ENCODE measurements at regions of chr1 and their contacts with region 1.

Region 1: GRCh38 chr1:46340404-46341221 is at the start of gene NSUN4:
- DNase-seq: peak; percentile 84 to 88
- H3K4me3 ChIP-seq: peak within 1 kb of the TSS; percentile 96
- H3K27ac ChIP-seq: peak within 1 kb of the TSS; percentile 90
- H3K4me1 ChIP-seq: peaks cover 20% of the 10 kb centered on the region; the same call in 1 of the 2 replicates
- H3K27me3 ChIP-seq: no peaks in the 10 kb centered on the region
- CTCF ChIP-seq: peak; percentile 68
- total RNA-seq, gene NSUN4: 31.7 and 33.9 TPM in 2 replicates

Region 2: DNA sequence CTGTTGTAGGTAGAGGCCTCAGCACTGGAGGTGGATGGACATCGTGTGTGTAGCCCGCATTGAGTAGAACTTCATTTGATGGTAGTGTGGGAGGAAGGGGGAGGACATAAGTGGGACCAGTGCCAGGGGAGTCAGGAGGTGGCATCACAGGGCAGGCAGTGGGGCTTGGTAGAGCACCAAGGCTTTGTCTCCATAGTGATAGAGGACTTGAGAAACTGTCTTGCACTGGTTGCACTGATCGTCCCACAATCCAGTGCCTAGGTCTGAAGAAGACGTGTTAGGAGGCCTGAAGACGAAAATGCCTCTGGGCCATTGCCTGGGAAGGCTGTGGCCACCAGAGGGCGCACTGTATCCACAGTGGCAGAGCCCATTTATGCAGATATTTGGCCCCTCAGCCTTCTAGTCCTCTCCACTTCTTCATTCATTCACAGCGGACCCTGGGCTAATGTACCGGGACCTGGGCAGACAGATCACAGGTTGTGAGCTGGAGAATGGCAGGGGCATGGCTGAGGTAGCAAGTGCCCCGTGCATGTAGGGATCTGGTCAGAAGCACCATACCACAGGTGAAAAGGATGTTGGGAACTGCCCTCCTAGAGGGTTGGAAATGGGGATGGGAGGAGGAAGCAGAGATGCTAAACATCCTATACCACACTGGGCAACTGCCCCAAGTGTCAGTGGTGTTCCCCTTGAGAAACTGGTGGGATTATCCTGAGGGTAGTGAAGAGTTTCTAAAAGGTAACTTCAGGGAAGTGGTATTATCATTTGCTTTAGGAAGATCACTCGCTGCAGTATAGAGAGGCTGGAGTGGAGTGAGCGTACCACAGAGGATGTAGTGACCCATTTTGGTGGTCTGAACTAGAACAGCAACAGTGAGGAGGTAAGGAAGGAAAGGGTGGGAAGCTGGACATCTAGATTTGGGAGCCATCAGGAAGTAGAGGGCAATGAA is 303.4 kb before region 1 on chr1:
- CTCF ChIA-PET with region 1: no interaction called
- POLR2A ChIA-PET with region 1: no interaction called
- intact Hi-C with region 1: loop called (anchors 5 kb)
- DNase-seq: peak; percentile 66 to 87
- H3K4me3 ChIP-seq: no peak overlapping the region
- H3K27ac ChIP-seq: no peak overlapping the region; the same call in 1 of the 2 replicates
- H3K4me1 ChIP-seq: peaks cover 24% of the 10 kb centered on the region
- H3K27me3 ChIP-seq: no peaks in the 10 kb centered on the region
- CTCF ChIP-seq: peak; percentile 97

Region 3: DNA sequence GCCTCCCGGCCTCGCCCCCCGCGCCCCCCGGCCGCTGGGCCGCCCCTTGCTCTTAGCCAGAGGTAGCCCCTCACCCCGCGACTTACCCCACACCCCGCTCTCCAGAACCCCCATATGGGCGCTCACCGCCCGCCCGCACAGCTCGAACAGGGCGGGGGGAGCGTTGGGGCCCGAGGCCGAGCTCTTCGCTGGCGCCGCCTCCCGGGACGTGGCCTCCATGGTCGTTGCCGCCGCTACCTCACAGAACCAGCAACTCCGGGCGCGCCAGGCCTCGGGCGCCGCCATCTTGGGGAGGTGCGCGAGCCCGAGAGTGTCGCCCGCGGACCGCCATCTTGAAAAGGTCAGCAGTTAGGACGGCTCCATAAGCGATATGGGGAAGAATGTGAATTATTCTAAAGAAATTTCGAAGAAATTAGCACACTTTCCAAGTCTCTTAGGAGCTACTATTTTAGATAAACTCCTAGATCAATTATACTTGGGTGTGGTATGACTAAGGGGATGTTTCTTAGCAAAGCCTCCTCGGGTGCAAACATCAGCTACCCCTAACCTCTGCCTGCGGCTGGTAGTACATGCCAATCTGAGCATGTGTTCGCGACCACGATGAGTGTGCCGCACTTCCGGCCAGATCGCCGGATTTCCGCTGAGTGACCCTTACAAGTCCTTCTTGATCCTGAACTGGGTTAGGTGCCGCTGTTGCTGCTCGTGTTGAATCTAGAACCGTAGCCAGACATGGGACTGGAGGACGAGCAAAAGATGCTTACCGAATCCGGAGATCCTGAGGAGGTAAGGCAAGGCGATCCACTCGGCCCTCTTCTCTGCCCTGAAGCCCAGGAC is 37.4 kb before region 1 on chr1 and contains the starts of genes LRRC41 and UQCRH:
- CTCF ChIA-PET with region 1: no interaction called
- POLR2A ChIA-PET with region 1: interaction called, 10 read pairs
- intact Hi-C with region 1: loop called (anchors 1 kb)
- DNase-seq: peak; percentile 94 to 95
- H3K4me3 ChIP-seq: peak within 1 kb of the TSS; percentile 95
- H3K27ac ChIP-seq: peak within 1 kb of the TSS; percentile 87
- H3K4me1 ChIP-seq: peaks cover 35% of the 10 kb centered on the region
- H3K27me3 ChIP-seq: no peaks in the 10 kb centered on the region
- CTCF ChIP-seq: 0 out of 2 replicates have a peak, but pooled peaks have one; percentile 12
- total RNA-seq, gene LRRC41: 65.9 and 66.3 TPM in 2 replicates
- total RNA-seq, gene UQCRH: 457 and 551 TPM in 2 replicates

Region 4: DNA sequence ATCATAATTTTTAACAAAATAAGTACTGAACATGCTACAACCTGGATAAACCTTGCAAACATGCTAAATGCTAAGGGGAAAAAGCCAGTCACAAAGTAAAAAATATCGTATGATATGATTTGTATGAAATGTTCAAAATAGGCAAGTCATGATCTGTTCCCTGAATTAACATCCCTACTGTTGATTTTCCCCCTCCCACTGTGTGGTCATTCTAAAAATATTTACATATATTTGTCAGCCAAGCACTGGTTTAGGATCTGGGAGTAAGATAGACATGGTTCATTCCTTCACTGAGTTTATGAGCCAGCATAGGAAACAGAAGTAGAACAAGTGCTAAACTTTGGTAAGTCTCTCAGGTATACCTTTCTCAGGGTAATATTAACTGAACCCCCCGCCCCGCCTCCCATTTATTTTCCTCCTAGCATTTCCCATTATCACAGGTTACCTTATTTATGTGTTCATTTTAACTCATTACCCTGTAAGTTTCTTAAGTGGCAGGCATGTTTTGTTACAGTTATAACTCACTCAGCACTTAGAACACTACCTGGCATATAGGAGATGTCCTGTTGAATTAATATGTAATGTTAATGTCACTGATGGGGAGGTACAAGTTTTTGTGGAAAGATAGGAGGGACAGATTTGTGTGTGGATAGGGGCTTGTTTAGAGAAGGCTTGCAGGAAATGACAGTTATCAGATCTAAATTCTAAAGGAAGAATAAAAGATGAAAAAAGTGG is 24.8 kb before region 1 on chr1:
- CTCF ChIA-PET with region 1: no interaction called
- POLR2A ChIA-PET with region 1: interaction called, 15 read pairs
- intact Hi-C with region 1: no loop called
- DNase-seq: no peak
- H3K4me3 ChIP-seq: no peak overlapping the region
- H3K27ac ChIP-seq: no peak overlapping the region
- H3K4me1 ChIP-seq: no peaks in the 10 kb centered on the region
- H3K27me3 ChIP-seq: no peaks in the 10 kb centered on the region
- CTCF ChIP-seq: no peak

Region 5: GRCh38 chr1:46394108-46394871 is 53.7 kb after region 1 on chr1 and contains the start of gene FAAH:
- CTCF ChIA-PET with region 1: no interaction called
- POLR2A ChIA-PET with region 1: no interaction called
- intact Hi-C with region 1: loop called (anchors 2 kb)
- DNase-seq: peak in 1 of 2 experiments; percentile 82
- H3K4me3 ChIP-seq: peak within 1 kb of the TSS; percentile 53
- H3K27ac ChIP-seq: no peak within 1 kb of the TSS
- H3K4me1 ChIP-seq: no peaks in the 10 kb centered on the region
- H3K27me3 ChIP-seq: peaks cover 7% of the 10 kb centered on the region; the same call in 1 of the 2 replicates
- CTCF ChIP-seq: no peak
- total RNA-seq, gene FAAH: 19.1 and 23.8 TPM in 2 replicates

Region 6: GRCh38 chr1:46408356-46409062 is 67.9 kb after region 1 on chr1:
- CTCF ChIA-PET with region 1: no interaction called
- POLR2A ChIA-PET with region 1: interaction called, 17 read pairs
- intact Hi-C with region 1: no loop called
- DNase-seq: no peak
- H3K4me3 ChIP-seq: no peak overlapping the region
- H3K27ac ChIP-seq: no peak overlapping the region
- H3K4me1 ChIP-seq: no peaks in the 10 kb centered on the region
- H3K27me3 ChIP-seq: no peaks in the 10 kb centered on the region
- CTCF ChIP-seq: no peak